Endothelial cell of umbilical vein (primary cell): ENCODE measurements at regions of chr10 and their contacts with region 1.

Region 1: GRCh38 chr10:110567201-110568054 is at the start of gene SMC3:
- DNase-seq: peak; percentile 96
- H3K4me3 ChIP-seq: peak within 1 kb of the TSS; percentile 65 to 95 (median 90)
- H3K27ac ChIP-seq: peak within 1 kb of the TSS; percentile 96
- H3K4me1 ChIP-seq: peaks cover 14% of the 10 kb centered on the region
- H3K27me3 ChIP-seq: peaks cover 0 to 1% of the 10 kb centered on the region in 2 experiments
- CTCF ChIP-seq: no peak
- POLR2A ChIP-seq: peak; percentile 61
- total RNA-seq, gene SMC3: 44.2 and 45.0 TPM in 2 replicates

Region 2: DNA sequence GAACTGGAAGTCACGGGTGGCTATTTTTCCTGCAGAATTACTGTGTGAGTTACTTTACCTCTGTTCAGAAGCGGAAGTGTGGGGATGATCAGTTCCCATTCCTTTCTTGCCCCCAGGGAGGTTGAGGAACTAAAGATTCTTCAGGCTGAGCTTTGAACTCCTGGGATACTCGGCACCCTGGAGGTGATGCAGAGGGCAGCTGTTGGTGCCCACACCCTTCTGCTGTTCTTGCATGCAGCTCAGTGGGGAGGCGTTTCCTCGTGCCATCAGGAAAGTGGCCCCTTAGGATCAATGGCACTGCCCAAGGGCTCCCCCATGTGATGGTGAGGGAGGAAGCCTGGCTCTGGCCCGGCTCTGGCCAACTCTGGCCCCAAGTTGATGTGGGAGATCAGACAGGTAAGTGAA is 404.7 kb before region 1 on chr10:
- CTCF ChIA-PET with region 1: no interaction called
- POLR2A ChIA-PET with region 1: no interaction called
- dilution Hi-C with region 1: no loop called
- intact Hi-C with region 1: no loop called
- DNase-seq: no peak
- H3K4me3 ChIP-seq: no peak overlapping the region
- H3K27ac ChIP-seq: no peak overlapping the region
- H3K4me1 ChIP-seq: no peaks in the 10 kb centered on the region
- H3K27me3 ChIP-seq: peaks cover 7 to 11% of the 10 kb centered on the region in 2 experiments
- CTCF ChIP-seq: no peak
- POLR2A ChIP-seq: no peak

Region 3: DNA sequence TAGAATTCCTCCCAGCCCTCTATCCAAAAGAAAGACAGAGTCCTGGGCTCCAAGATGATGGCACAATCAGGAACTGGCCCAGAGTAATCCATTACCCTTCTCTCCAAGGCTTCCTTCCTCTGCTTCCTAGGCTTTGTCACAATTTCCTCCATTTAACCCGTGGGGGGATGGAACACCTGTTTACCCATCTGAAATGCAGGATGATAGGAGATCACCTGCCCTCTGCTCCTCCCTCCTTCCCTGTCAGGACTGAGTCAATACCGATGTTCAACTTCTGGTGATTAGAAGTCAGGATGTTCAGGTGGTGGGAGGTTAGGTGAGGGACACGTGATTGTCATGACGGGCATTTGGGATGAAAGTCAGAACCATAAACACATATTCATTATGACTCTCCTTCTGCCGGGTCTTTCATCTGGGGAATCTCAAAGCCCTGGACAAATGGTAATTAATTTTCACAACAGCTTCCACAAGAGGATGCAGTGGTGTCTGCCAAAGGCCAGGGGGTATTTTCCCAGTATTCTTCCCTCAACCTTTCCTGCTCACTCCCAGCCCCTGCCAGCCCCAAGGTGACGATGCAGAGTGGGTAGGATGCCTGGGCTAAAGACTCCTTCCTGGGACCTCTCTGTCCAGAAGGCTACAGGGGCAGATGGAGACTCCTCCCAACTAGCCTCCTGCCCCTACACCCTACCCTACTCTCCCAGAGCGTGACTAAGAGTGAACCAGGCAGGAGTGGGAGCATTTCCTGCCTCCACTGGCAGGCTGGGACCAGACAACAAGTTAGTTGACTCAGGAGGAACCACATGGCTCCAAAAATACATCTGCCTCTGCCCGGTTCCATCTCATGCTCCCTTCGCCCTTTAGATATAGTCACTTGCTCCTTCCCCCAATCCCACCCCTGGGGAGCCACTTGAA is 41.8 kb before region 1 on chr10:
- CTCF ChIA-PET with region 1: no interaction called
- POLR2A ChIA-PET with region 1: no interaction called
- dilution Hi-C with region 1: no loop called
- intact Hi-C with region 1: no loop called
- DNase-seq: no peak
- H3K4me3 ChIP-seq: no peak overlapping the region
- H3K27ac ChIP-seq: peak overlapping the region; percentile 47
- H3K4me1 ChIP-seq: peaks cover 55% of the 10 kb centered on the region
- H3K27me3 ChIP-seq: no peaks in the 10 kb centered on the region
- CTCF ChIP-seq: no peak
- POLR2A ChIP-seq: no peak

Region 4: GRCh38 chr10:110535958-110536891 is 31.2 kb before region 1 on chr10:
- CTCF ChIA-PET with region 1: no interaction called
- POLR2A ChIA-PET with region 1: no interaction called
- dilution Hi-C with region 1: no loop called
- intact Hi-C with region 1: loop called (anchors 1 kb)
- DNase-seq: peak; percentile 44
- H3K4me3 ChIP-seq: no peak overlapping the region
- H3K27ac ChIP-seq: no peak overlapping the region
- H3K4me1 ChIP-seq: peaks cover 15% of the 10 kb centered on the region
- H3K27me3 ChIP-seq: no peaks in the 10 kb centered on the region
- CTCF ChIP-seq: peak; percentile 8 to 27
- POLR2A ChIP-seq: no peak

Region 5: DNA sequence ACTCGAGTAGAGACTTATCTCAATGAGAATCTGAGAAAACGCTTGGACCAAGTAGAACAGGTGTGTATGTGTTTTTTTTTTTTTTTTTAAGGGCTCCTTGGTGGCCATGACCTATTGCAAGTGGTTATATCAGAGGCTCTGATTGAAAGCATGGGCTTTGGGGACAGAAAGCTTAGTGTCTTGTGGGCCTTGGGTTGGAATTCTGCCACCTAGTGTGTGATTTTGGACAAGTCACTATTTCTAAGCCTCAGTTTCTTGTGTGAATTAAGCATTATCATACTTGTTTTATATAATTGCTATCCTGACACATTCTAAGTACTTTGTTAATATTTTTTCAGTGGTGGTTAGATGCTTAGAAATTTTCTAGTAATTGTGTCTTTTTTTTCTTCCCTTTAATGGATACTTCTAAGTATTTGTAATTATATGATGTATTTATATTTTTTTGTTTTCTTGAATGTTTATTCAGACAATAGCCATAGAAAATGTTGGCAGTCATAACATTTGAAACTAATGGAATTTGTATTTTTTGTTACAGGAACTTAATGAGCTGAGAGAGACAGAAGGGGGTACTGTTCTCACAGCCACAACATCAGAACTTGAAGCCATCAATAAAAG is 33.2 kb after region 1 on chr10:
- CTCF ChIA-PET with region 1: interaction called, 4 read pairs
- POLR2A ChIA-PET with region 1: no interaction called
- dilution Hi-C with region 1: no loop called
- intact Hi-C with region 1: loop called (anchors 5 kb)
- DNase-seq: peak; percentile 80
- H3K4me3 ChIP-seq: no peak overlapping the region
- H3K27ac ChIP-seq: no peak overlapping the region
- H3K4me1 ChIP-seq: peaks cover 6% of the 10 kb centered on the region
- H3K27me3 ChIP-seq: no peaks in the 10 kb centered on the region
- CTCF ChIP-seq: peak; percentile 42 to 59
- POLR2A ChIP-seq: no peak

Region 6: DNA sequence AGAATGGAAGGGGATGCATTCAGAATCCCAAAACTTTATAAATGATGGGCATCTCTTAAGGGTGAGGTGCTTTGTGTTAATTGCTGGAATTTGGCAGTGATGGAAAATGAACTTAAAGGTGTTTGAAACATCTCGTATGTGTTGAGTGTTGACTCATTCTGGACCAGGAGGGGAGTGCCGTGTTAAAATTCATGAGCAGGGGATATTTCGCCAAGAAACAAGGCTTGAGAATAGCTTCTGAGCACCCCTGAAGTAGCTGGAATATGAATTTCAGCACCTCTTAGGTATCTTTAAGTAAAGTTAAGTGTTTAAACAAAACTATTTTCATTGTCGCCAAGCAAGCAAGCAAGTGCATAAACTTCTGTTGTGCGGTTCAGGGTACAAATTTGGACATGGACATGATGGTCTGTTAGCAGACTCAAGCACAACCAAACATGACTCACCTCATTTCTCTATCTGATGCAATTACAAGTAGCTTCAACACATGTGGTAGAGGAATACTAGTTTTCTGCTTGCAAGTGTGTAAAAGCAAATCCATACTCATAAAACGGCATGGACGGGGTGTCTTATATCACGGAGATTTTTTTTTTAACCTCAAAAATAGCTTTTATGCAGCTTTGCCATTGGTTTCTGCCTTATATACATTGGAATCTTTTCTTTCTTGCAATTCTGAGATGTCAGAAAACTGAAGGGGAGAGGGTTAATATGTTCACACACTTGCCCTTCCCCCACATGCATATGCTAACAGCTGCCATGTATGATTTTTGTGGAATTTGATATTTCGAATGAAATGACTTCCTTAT is 198.0 kb after region 1 on chr10:
- CTCF ChIA-PET with region 1: no interaction called
- POLR2A ChIA-PET with region 1: no interaction called
- dilution Hi-C with region 1: no loop called
- intact Hi-C with region 1: no loop called
- DNase-seq: no peak
- H3K4me3 ChIP-seq: no peak overlapping the region
- H3K27ac ChIP-seq: no peak overlapping the region
- H3K4me1 ChIP-seq: no peaks in the 10 kb centered on the region
- H3K27me3 ChIP-seq: peaks cover 3 to 13% of the 10 kb centered on the region in 2 experiments
- CTCF ChIP-seq: no peak
- POLR2A ChIP-seq: no peak